CD4-positive, alpha-beta memory T cell (primary cell): ENCODE measurements at regions of chr7 and their contacts with region 1.

Region 1: DNA sequence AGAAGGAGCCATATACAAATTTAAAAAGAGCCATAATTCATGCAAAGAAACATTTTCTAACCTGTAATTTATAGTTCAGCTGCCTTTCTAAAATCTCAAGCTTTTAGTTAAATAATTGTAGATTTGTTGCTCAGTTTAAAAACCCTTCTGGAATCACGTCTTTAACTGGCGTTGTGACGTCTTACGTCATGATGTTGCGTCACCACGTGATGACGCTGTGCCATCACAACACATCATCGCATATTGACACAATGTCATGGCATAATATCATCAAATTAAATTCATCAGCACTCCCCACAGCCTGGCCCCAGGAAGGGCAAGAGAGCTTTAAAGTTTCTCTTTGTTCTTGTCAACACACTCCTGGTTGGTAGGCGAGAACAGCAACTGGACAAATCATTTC is 194.8 kb downstream of the GRM8 start:
- DNase-seq: no peak
- H3K4me3 ChIP-seq: no peak overlapping the region
- H3K4me3 Mint-ChIP-seq: no peak overlapping the region
- H3K27ac ChIP-seq: no peak overlapping the region
- H3K27ac Mint-ChIP-seq: no peak overlapping the region
- H3K4me1 ChIP-seq: no peaks in the 10 kb centered on the region
- H3K4me1 Mint-ChIP-seq: no peaks in the 10 kb centered on the region
- H3K27me3 ChIP-seq: no peaks in the 10 kb centered on the region
- H3K27me3 Mint-ChIP-seq: peaks cover 0 to 3% of the 10 kb centered on the region in 2 donors

Region 2: GRCh38 chr7:126993626-126994213 is 64.2 kb before region 1 on chr7:
- CTCF ChIA-PET with region 1: no interaction called
- POLR2A ChIA-PET with region 1: no interaction called
- intact Hi-C with region 1: loop called (anchors 10 kb)
- DNase-seq: no peak
- H3K4me3 ChIP-seq: no peak overlapping the region
- H3K4me3 Mint-ChIP-seq: no peak overlapping the region
- H3K27ac ChIP-seq: no peak overlapping the region
- H3K27ac Mint-ChIP-seq: no peak overlapping the region
- H3K4me1 ChIP-seq: no peaks in the 10 kb centered on the region
- H3K4me1 Mint-ChIP-seq: no peaks in the 10 kb centered on the region
- H3K27me3 ChIP-seq: no peaks in the 10 kb centered on the region
- H3K27me3 Mint-ChIP-seq: peaks cover 0 to 2% of the 10 kb centered on the region in 2 donors